ENCODE measurements at regions of chr21 and their contacts with region 1.

Region 1: DNA sequence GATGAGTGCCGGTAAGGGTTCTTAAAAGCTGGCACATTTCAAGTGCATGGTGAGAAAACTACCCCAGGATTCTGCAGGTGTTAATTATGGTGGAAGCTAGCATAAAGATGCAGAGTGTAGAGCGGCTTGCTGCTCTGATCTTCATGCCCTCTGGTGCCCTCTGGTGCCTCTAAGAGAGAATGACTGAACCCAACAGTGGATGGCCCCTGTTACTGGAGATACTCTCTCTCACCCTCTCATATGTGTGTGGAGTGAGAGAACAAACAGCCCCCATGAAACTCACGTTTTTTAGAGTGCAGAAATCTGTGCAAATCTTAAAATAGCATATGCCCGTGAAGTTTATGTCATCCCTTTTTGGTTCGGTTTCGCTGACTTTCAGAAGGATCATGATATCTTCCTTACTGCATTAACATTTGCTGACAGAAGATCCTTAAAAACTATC is 90.0 kb downstream of the GRIK1 start:
- DNase-seq: peak; percentile 27
- H3K4me3 Mint-ChIP-seq: no peak overlapping the region
- H3K27ac Mint-ChIP-seq: no peak overlapping the region
- H3K4me1 Mint-ChIP-seq: no peaks in the 10 kb centered on the region
- H3K27me3 Mint-ChIP-seq: peaks cover 2% of the 10 kb centered on the region

Region 2: DNA sequence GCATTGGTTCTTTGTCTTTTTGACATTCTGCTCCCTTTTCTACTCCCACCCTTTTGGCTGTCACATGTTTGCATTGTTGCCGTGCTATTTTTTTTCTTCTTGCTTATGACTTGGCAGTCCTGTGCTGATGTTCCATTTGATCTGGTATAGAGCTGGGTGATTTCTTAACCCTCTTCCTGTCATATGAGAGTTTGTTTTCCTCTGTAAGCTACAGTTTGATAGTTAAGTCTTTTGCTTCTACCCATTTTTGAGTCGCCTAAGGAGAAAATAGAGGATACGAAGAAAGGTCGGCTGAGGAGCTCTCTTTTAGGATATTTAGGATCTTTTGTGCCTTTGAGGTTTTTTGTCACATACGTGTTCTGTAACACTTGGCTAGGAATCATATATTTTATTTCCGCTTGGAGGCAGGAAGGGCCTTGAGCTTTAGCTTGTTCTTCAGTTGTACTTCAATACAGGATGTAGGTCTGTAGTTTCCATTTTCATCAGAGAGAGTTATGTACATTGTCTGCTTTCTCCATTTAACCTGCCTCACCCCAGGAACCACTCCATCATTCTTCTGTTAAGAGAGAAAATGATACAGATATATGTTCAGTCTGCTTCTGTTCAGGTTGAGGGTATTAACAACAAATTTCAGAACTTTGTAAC is 400.3 kb before region 1 on chr21:
- intact Hi-C with region 1: no loop called
- DNase-seq: no peak
- H3K4me3 Mint-ChIP-seq: peak overlapping the region; percentile 3
- H3K27ac Mint-ChIP-seq: peak overlapping the region; percentile 90
- H3K4me1 Mint-ChIP-seq: peaks cover 15% of the 10 kb centered on the region
- H3K27me3 Mint-ChIP-seq: no peaks in the 10 kb centered on the region

Region 3: DNA sequence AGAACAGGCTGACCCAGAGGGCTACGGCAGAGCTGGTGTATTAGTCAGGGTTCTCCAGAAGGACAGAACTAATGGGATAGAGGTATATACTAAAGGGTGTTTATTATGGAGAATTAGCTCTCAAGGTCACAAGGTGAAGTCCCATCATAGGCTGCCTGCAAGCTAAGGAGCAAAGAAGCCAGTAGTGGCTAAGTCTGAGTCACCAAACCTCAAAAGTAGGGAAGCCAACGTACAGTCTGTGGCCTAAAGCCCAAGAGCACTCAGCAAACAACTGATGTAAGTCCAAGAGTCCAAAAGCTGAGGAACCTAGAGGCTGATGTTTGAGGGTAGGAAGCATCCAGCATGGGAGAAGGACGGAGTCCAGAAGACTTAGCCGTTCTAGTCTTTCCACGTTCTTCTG is 371.8 kb before region 1 on chr21:
- intact Hi-C with region 1: loop called (anchors 1 kb)
- DNase-seq: no peak
- H3K4me3 Mint-ChIP-seq: no peak overlapping the region
- H3K27ac Mint-ChIP-seq: no peak overlapping the region
- H3K4me1 Mint-ChIP-seq: peaks cover 6% of the 10 kb centered on the region
- H3K27me3 Mint-ChIP-seq: peaks cover 4% of the 10 kb centered on the region

Region 4: GRCh38 chr21:29961291-29962027 is 111.7 kb after region 1 on chr21:
- intact Hi-C with region 1: no loop called
- DNase-seq: no peak
- H3K4me3 Mint-ChIP-seq: no peak overlapping the region
- H3K27ac Mint-ChIP-seq: no peak overlapping the region
- H3K4me1 Mint-ChIP-seq: no peaks in the 10 kb centered on the region
- H3K27me3 Mint-ChIP-seq: peaks cover 2% of the 10 kb centered on the region

Measured in activated T-helper 1 cell treated with anti-CD3 and anti-CD28 coated beads, Interleukin-12 subunit alpha, Interleukin-12 subunit beta, Interleukin-2, Interleukin-4 antibody, amounts not matched to agents 30 ng/mL and 10 ng/mL and 1 ng/mL, durations not matched to agents 14 hours and 24 hours and 36 hours (primary cell).